OCI-LY7 (cell line): ENCODE measurements at regions of chr9 and their contacts with region 1.

Region 1: DNA sequence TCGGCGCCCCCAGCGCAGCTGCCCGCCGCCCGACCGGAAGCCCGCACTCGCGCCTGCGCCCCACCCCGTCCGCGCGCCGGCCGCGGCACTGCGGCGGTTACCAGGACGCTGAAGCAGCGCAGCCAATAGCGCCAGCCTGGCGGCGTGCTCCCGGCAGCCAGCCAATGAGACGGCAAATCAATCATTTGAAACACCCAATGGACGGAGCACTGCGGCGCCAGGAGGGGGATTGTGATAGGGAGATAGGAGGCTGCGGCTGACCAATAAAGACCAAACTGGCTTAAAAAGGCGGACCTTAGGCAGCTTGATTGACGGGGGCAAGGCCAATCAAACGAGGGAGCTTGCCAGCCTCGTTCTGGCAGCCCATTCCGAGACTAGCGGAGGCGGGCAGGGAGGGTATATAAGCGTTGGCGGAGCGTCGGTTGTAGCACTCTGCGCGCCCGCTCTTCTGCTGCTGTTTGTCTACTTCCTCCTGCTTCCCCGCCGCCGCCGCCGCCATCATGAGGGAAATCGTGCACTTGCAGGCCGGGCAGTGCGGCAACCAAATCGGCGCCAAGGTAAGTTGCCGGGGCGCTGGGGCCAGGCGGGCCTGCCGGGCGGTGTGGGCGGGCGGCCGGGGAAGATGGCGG is at the start of gene TUBB4B:
- DNase-seq: peak; percentile 100
- H3K4me3 ChIP-seq: peak within 1 kb of the TSS; percentile 98
- H3K27ac ChIP-seq: peak within 1 kb of the TSS; percentile 89
- H3K4me1 ChIP-seq: peaks cover 54% of the 10 kb centered on the region
- CTCF ChIP-seq: no peak
- total RNA-seq, gene TUBB4B: 376 and 417 TPM in 2 replicates

Region 2: DNA sequence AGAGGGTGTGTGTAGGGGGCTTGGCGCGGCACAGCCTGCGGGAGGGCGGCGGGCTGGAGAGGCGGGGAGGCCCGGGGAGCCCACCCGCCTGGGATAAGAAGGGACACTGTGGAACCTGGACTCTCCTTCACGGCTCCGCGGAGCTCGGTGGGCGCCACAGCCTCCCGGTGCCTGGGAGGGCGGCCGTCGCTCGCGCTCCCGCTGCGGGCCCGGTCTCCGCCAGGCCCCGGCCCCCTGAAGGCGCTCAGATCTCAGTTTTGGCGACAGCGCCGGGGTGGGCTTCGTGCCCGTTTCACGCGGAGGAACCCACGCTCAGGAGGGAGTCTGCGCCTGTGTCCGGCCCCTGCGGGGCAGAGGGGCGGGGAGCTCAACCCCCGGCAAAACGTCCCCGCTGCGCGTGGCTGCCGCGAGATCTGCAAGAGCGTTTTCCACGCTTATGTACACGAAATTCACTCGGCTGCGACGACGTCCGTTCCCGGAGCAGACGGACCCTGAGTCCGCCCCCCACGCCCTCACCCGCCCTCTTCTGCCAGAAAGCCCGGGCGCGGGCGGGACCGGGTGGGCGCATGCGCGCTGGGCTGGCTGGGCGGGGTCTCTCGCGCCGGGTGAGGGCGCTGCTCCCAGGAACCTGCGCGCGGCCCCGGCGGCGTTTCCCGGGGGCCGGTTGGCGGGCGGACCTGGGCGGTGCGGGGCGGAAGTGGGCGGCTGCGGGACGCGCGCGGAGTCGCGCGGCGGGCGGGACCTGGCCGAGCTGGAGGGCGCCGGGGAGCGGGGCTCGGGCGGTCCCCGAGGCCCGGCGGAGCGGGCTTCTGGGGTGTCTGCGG is 13.9 kb after region 1 on chr9 and contains the start of gene NELFB:
- CTCF ChIA-PET with region 1: no interaction called
- POLR2A ChIA-PET with region 1: interaction called, 26 read pairs
- intact Hi-C with region 1: loop called (anchors 1 kb)
- DNase-seq: peak; percentile 92
- H3K4me3 ChIP-seq: peak within 1 kb of the TSS; percentile 98
- H3K27ac ChIP-seq: peak within 1 kb of the TSS; percentile 62
- H3K4me1 ChIP-seq: peaks cover 53% of the 10 kb centered on the region
- CTCF ChIP-seq: no peak
- total RNA-seq, gene NELFB: 59.5 and 62.6 TPM in 2 replicates

Region 3: GRCh38 chr9:137269231-137269772 is 28.3 kb after region 1 on chr9:
- CTCF ChIA-PET with region 1: interaction called, 3 read pairs
- POLR2A ChIA-PET with region 1: interaction called, 3 read pairs
- intact Hi-C with region 1: loop called (anchors 2 kb)
- DNase-seq: peak; percentile 82
- H3K4me3 ChIP-seq: peak overlapping the region; percentile 65
- H3K27ac ChIP-seq: peak overlapping the region; percentile 90
- H3K4me1 ChIP-seq: peaks cover 61% of the 10 kb centered on the region
- CTCF ChIP-seq: no peak

Region 4: GRCh38 chr9:137277329-137278041 is 36.5 kb after region 1 on chr9 and contains the start of gene TOR4A:
- CTCF ChIA-PET with region 1: no interaction called
- POLR2A ChIA-PET with region 1: interaction called, 3 read pairs
- intact Hi-C with region 1: loop called (anchors 2 kb)
- DNase-seq: peak; percentile 90
- H3K4me3 ChIP-seq: peak within 1 kb of the TSS; percentile 69
- H3K27ac ChIP-seq: peak within 1 kb of the TSS; percentile 77
- H3K4me1 ChIP-seq: peaks cover 71% of the 10 kb centered on the region
- CTCF ChIP-seq: peak; percentile 42; the same call in 1 of the 2 replicates
- total RNA-seq, gene TOR4A: 11.6 and 11.7 TPM in 2 replicates